Adrenal gland (tissue), 19 donors: ENCODE measurements at regions of chr18 and their contacts with region 1.

Region 1: DNA sequence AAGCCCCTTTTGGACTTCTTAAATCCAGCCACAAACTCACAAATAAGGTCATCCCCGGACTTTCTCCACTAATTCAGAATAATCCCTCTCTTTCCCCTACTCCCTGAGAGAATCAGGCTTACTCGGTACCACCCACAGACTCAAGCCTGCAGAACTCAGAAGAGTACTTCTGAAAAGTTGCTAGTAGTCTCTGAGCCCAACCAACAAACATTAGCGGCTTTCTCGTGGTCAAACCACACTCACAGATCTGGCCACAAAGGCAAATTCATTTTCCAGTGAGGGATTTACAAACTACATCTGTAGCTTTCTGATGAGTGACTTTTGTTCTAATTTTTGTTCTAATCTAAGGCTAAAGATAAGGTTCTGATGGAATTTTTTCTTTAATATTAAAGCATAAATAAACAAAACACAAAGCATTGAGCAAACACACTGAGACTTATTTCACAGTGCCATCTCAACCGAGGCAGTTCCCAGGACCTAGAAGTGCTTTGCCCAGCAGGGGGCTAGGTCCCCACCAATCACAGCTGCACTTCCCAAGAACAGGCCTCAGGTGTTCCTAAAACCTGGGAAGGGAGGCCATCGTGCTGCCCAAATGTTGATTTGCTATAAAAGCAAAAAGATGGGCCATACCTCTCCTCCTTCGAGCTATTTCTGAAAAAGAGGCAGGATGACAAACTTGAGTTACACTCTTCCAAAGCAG is 110.7 kb downstream of the COLEC12 start:
- DNase-seq: no peak
- H3K4me3 ChIP-seq: no peak overlapping the region
- H3K27ac ChIP-seq: no peak overlapping the region
- H3K4me1 ChIP-seq: no peaks in the 10 kb centered on the region
- H3K27me3 ChIP-seq: no peaks in the 10 kb centered on the region
- CTCF ChIP-seq: no peak
- POLR2A ChIP-seq: no peak

Region 2: DNA sequence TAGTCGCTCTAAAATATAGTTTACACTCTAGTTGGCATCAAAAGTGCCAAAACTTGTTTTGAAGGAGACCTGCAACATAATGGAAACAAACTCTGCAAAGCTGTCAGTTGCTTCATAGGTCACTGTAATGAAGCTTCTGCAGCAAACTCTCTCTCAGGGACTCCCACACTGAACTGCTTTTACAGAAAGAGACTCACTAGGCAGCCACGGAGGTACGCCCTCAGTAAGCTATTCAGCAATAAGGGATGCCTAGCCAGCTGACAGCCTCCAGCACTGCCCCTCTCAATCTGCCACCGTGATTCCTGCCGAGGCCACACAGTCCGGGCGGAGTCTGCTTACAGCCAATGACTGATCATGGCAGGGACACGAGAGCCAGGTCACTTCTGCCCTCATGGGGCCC is 59.6 kb after region 1 on chr18:
- intact Hi-C with region 1: loop called in 1 of 2 experiments (anchors 10 kb)
- DNase-seq: peak in 1 of 7 donors; percentile 70
- H3K4me3 ChIP-seq: no peak overlapping the region
- H3K27ac ChIP-seq: no peak overlapping the region
- H3K4me1 ChIP-seq: no peaks in the 10 kb centered on the region
- H3K27me3 ChIP-seq: no peaks in the 10 kb centered on the region
- CTCF ChIP-seq: no peak
- POLR2A ChIP-seq: no peak